Activated CD8-positive, alpha-beta T cell treated with anti-CD3 and anti-CD28 coated beads for 36 hours (primary cell): ENCODE measurements at regions of chr16 and their contacts with region 1.

Region 1: GRCh38 chr16:68040507-68041288 is 17.6 kb downstream of the DUS2 start:
- DNase-seq: peak; percentile 95
- ATAC-seq: peak; percentile 98
- H3K4me3 Mint-ChIP-seq: no peak overlapping the region
- H3K27ac Mint-ChIP-seq: peak overlapping the region; percentile 40
- H3K4me1 Mint-ChIP-seq: peaks cover 13% of the 10 kb centered on the region
- H3K27me3 Mint-ChIP-seq: no peaks in the 10 kb centered on the region
- CTCF ChIP-seq: peak; percentile 82

Region 2: GRCh38 chr16:67993189-67994039 is 47.3 kb before region 1 on chr16:
- CTCF ChIA-PET with region 1: interaction called, 15 read pairs
- POLR2A ChIA-PET with region 1: interaction called, 6 read pairs
- intact Hi-C with region 1: loop called (anchors 1 kb)
- DNase-seq: peak; percentile 90
- ATAC-seq: peak; percentile 84
- H3K4me3 Mint-ChIP-seq: peak overlapping the region; percentile 75
- H3K27ac Mint-ChIP-seq: peak overlapping the region; percentile 98
- H3K4me1 Mint-ChIP-seq: peaks cover 40% of the 10 kb centered on the region
- H3K27me3 Mint-ChIP-seq: no peaks in the 10 kb centered on the region
- CTCF ChIP-seq: peak; percentile 97

Region 3: DNA sequence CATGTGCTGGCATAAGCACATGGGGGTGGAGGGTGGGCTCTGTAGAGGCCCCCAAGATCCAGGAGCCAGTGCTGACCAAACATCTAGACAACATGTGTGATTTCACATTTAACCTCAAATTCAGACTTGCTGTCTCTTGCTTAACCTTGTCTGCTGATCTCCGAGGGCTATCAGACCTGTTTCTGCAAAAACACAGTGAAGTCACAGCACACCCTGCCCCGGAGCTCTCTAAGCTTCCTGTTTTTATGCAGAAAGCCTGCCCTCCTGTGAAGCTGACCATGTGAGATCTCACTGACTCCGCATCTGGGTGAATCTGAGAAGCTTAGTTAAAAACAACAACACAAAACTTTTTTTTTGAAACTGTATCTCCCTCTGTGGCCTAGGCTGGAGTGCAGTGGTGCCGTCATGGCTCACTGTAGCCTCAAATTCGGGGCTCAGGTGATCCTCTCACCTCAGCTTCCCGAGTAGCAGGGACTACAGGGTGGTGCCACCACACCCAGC is 34.9 kb before region 1 on chr16:
- CTCF ChIA-PET with region 1: interaction called, 16 read pairs
- POLR2A ChIA-PET with region 1: interaction called, 3 read pairs
- intact Hi-C with region 1: no loop called
- DNase-seq: peak; percentile 44
- ATAC-seq: peak; percentile 77
- H3K4me3 Mint-ChIP-seq: no peak overlapping the region
- H3K27ac Mint-ChIP-seq: peak overlapping the region; percentile 95
- H3K4me1 Mint-ChIP-seq: peaks cover 24% of the 10 kb centered on the region
- H3K27me3 Mint-ChIP-seq: no peaks in the 10 kb centered on the region
- CTCF ChIP-seq: no peak

Region 4: GRCh38 chr16:68022704-68023522 is 17.8 kb before region 1 on chr16 and contains the starts of genes DDX28 and DUS2:
- CTCF ChIA-PET with region 1: interaction called, 61 read pairs
- POLR2A ChIA-PET with region 1: interaction called, 4 read pairs
- intact Hi-C with region 1: no loop called
- DNase-seq: peak; percentile 95
- ATAC-seq: peak; percentile 93
- H3K4me3 Mint-ChIP-seq: peak within 1 kb of the TSS; percentile 87
- H3K27ac Mint-ChIP-seq: peak within 1 kb of the TSS; percentile 96
- H3K4me1 Mint-ChIP-seq: peaks cover 23% of the 10 kb centered on the region
- H3K27me3 Mint-ChIP-seq: no peaks in the 10 kb centered on the region
- CTCF ChIP-seq: no peak
- total RNA-seq, gene DDX28: 16.6 to 17.3 TPM
- total RNA-seq, gene DUS2: 34.2 to 35.1 TPM

Region 5: GRCh38 chr16:68064791-68065365 is 24.2 kb after region 1 on chr16:
- CTCF ChIA-PET with region 1: interaction called, 10 read pairs
- POLR2A ChIA-PET with region 1: no interaction called
- intact Hi-C with region 1: no loop called
- DNase-seq: peak; percentile 85
- ATAC-seq: peak; percentile 73
- H3K4me3 Mint-ChIP-seq: no peak overlapping the region
- H3K27ac Mint-ChIP-seq: peak overlapping the region; percentile 79
- H3K4me1 Mint-ChIP-seq: peaks cover 59% of the 10 kb centered on the region
- H3K27me3 Mint-ChIP-seq: no peaks in the 10 kb centered on the region
- CTCF ChIP-seq: peak; percentile 90

Region 6: GRCh38 chr16:68206245-68206644 is 165.5 kb after region 1 on chr16:
- CTCF ChIA-PET with region 1: no interaction called
- POLR2A ChIA-PET with region 1: no interaction called
- intact Hi-C with region 1: no loop called
- DNase-seq: no peak
- ATAC-seq: no peak
- H3K4me3 Mint-ChIP-seq: no peak overlapping the region
- H3K27ac Mint-ChIP-seq: no peak overlapping the region
- H3K4me1 Mint-ChIP-seq: peaks cover 27% of the 10 kb centered on the region
- H3K27me3 Mint-ChIP-seq: no peaks in the 10 kb centered on the region
- CTCF ChIP-seq: no peak